Thyroid gland (tissue), 4 donors: ENCODE measurements at regions of chr10 and their contacts with region 1.

Region 1: GRCh38 chr10:68717435-68717834 is 3.6 kb upstream of the CCAR1 start:
- DNase-seq: no peak
- H3K4me3 ChIP-seq: no peak overlapping the region
- H3K27ac ChIP-seq: no peak overlapping the region
- H3K4me1 ChIP-seq: peaks cover 0 to 3% of the 10 kb centered on the region in 2 donors
- H3K27me3 ChIP-seq: no peaks in the 10 kb centered on the region
- CTCF ChIP-seq: no peak
- POLR2A ChIP-seq: no peak

Region 2: GRCh38 chr10:68550747-68551411 is 166.6 kb before region 1 on chr10:
- intact Hi-C with region 1: loop called (anchors 5 kb)
- DNase-seq: peak; percentile 58
- H3K4me3 ChIP-seq: no peak overlapping the region
- H3K27ac ChIP-seq: no peak overlapping the region
- H3K4me1 ChIP-seq: no peaks in the 10 kb centered on the region
- H3K27me3 ChIP-seq: no peaks in the 10 kb centered on the region
- CTCF ChIP-seq: peak; percentile 74 to 90 (median 76)
- POLR2A ChIP-seq: no peak